ENCODE measurements at regions of chr1 and their contacts with region 1.

Region 1: GRCh38 chr1:154906621-154907081 is 29.9 kb downstream of the PMVK start:
- DNase-seq: no peak
- ATAC-seq: peak in 1 of 2 donors; percentile 61

Region 2: GRCh38 chr1:154943649-154944400 is 37.2 kb after region 1 on chr1:
- intact Hi-C with region 1: loop called in 1 of 2 experiments (anchors 2 kb)
- DNase-seq: peak; percentile 32
- ATAC-seq: peak; percentile 43 to 50

Region 3: DNA sequence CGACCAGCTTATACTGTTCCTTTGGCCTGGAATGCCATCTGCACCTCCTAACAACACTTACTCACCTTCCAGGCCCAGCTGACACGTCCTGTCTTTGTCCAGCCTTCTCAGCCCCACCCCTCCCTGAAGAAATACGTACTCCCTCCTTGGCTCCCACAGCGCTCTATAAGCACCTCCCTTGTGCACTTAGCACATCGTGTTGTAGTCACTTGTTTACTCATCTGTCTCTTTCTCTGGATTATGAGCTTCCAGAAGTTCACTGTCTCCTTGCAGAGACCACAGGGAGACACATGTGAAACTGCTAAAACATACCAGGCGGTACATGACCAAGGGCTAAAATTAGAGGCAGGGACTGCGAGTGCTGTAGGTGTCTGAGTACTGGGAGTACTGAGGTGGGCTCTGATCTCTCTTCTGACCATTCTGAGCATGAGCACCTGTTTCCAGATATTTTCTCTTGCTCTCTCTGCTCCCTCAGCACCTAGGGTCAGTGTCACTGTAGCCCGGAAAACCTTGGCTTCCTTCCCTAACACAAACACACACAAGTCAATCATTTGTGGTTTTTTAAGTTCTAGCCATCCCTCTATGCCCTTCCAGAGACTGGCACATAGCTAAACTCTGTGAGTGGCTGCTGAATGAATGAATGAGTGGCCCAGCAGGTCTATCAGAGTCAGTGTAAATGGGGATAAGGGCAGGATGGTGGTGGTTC is 132.1 kb after region 1 on chr1:
- intact Hi-C with region 1: loop called in 1 of 2 experiments (anchors 10 kb)
- DNase-seq: no peak
- ATAC-seq: peak; percentile 46 to 88